Endothelial cell of umbilical vein (primary cell): ENCODE measurements at regions of chr1 and their contacts with region 1.

Region 1: DNA sequence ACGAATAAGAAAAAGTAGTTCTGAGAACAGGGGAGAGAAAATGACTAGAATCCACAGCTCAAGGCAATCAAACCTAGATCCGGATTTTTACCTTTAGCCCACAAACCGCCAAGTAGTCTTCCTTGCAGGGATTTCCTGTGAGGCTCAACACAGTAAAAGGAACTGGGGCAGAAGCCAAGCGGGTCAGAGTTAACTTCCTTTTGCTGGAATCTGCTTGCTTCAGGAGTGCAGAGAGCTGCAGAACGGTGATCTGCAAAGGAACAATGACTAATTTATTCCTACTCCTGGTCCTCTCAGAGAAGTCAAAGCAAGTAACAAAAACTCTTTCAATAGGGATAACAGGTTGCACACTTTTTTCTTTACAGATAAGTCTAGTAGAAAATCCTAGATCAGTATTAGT is 53.4 kb downstream of the UBR4 start:
- DNase-seq: peak; percentile 97
- H3K4me3 ChIP-seq: no peak overlapping the region
- H3K27ac ChIP-seq: no peak overlapping the region
- H3K4me1 ChIP-seq: peaks cover 19% of the 10 kb centered on the region
- H3K27me3 ChIP-seq: no peaks in the 10 kb centered on the region
- CTCF ChIP-seq: no peak
- POLR2A ChIP-seq: no peak

Region 2: DNA sequence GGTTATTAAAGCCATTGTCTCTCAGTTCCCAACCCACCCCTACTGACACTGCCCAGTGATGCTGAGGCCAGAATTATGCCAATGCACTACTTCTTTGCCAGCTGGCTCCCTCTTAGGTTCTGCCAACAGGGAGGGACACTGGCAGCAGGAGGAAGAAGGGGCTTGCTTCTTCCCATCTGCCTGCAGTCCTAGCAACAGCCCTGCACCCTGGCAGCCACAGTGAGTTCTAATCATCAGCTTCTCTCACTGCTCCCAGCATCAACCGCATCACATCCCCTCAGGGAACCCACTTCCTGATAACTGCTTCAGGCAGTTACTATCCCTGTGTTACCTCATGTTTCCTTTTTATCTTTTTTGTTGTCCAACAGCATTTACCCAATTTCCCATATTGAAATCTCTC is 32.8 kb before region 1 on chr1:
- CTCF ChIA-PET with region 1: no interaction called
- POLR2A ChIA-PET with region 1: no interaction called
- dilution Hi-C with region 1: no loop called
- intact Hi-C with region 1: loop called (anchors 5 kb)
- DNase-seq: no peak
- H3K4me3 ChIP-seq: no peak overlapping the region
- H3K27ac ChIP-seq: no peak overlapping the region
- H3K4me1 ChIP-seq: no peaks in the 10 kb centered on the region
- H3K27me3 ChIP-seq: no peaks in the 10 kb centered on the region
- CTCF ChIP-seq: no peak
- POLR2A ChIP-seq: no peak